Posterior cingulate gyrus (tissue), 11 donors: ENCODE measurements at regions of chr7 and their contacts with region 1.

Region 1: GRCh38 chr7:95723592-95724180 is 48.7 kb upstream of the DYNC1I1 start:
- DNase-seq: peak in 5 of 10 donors; percentile 13 to 75 (median 42)

Region 2: DNA sequence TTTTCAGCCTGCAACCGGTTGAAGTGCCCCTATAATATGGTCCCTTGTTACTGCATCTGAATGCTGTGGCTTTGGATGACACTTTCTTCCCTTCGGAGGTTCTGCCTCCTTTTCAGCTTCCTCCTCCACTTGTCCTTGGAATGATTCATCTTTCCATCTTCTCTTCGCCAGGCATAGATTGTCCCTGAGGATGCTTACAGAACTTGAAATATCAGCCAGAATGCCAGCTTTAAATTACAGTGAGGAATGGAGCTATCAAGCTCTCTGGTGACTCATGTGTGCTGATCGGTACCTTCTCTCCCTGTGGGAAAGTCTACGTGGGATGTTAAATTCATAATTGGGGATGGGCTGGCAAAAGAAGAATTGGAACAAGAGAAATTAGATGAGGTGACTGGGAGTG is 81.5 kb before region 1 on chr7:
- intact Hi-C with region 1: no loop called
- DNase-seq: no peak

Region 3: DNA sequence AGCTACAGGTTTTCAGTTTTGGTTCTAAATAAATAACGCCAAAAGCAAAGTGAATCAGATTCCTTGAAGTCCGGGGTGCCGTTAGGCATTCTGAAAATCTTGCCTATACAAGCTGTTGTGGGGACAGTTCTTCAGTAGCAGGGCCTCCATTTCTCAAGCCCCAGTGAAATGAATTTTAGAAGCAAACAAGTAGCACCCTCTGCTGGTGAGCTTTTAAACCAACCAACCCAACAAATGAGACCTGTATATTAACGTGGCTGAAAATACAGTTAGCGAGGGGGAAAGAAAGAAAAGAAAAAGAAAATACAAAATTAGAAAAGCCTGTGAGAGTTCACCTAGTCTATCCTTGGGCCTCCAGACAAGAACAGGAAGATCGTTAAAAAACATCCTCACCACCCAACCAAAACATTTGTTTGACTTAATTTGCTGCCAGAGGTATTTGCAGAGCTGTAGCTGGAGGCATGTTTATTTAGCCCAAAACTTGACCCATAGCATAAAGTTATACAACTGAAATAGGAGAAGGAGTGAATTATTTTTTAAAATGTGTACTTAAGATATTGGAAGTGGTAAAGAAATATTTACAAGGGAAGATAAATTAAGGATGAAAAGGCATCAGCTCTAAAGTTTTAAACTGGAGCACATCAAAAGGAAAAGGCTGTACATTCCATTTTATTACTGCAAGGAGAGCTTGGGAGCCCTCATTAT is 147.5 kb after region 1 on chr7:
- intact Hi-C with region 1: loop called (anchors 1 kb)
- DNase-seq: peak in 5 of 10 donors; percentile 21 to 67 (median 31)